Cardiac septum (tissue), 1 donor: ENCODE measurements at regions of chr12 and their contacts with region 1.

Region 1: DNA sequence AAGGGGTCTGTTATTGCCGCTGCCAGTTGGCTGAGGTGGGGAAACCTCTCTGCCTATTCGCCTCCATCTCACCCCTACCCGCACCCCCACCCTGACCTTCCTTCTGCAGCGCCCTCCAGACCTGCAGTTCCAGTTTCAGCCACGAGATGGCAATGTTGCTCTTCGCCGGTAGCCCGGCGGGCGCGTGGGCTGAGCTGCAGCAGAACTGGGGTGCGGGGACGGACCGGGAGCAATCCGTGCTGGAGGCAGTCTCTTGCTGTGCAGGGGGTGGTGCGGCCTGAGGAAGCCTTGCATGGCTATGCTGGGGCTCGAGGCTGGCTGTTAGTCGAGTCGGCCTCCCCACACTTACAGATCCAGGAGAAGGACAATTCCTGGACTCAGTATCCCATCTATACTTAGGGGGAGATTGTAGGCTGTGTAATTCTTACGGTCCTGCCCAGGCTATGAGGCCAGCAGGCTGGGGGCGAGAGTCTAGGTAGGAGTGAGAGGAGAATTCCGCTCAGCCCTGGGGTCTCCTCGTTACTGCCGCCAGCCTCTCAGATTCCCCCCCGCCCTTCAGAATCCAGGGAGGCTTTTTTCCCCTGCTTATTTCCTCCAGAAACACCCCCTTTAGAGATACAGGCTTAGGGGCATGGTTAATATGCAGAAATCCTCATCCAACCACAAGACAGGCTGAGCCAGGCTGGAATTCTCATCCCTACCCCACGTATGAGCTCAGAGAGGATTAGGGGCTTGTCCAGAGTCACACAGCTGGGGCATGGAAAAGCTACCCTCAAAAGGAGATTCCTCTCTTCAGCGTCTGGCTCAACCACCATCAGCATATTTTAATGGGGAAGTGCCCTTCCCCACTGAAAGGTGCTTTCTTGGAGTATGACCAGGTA is 118.2 kb downstream of the AACS start:
- DNase-seq: peak; percentile 88

Region 2: GRCh38 chr12:125402874-125403789 is 219.7 kb after region 1 on chr12:
- intact Hi-C with region 1: loop called (anchors 5 kb)
- DNase-seq: no peak

Region 3: GRCh38 chr12:125533434-125534029 is 350.1 kb after region 1 on chr12:
- intact Hi-C with region 1: loop called (anchors 10 kb)
- DNase-seq: no peak

Region 4: GRCh38 chr12:126874427-126875026 is 1691.1 kb after region 1 on chr12:
- intact Hi-C with region 1: loop called (anchors 5 kb)
- DNase-seq: no peak